ENCODE measurements at regions of chr2 and their contacts with region 1.

Region 1: GRCh38 chr2:75311993-75312392 is 112.7 kb upstream of the TACR1 start:
- DNase-seq: peak in 3 of 4 experiments; percentile 10 to 25 (median 24)
- ATAC-seq: peak; percentile 91
- H3K4me3 ChIP-seq: no peak overlapping the region
- H3K27ac ChIP-seq: no peak overlapping the region
- H3K4me1 ChIP-seq: peaks cover 0 to 5% of the 10 kb centered on the region in 2 experiments; a peak in 1 of 5 replicates
- H3K27me3 ChIP-seq: no peaks in the 10 kb centered on the region; a peak in 1 of 5 replicates
- CTCF ChIP-seq: peak in 1 of 3 experiments; percentile 37; a peak in 2 of 6 replicates
- EP300 ChIP-seq: no peak
- POLR2A ChIP-seq: no peak
- RAD21 ChIP-seq: no peak

Region 2: DNA sequence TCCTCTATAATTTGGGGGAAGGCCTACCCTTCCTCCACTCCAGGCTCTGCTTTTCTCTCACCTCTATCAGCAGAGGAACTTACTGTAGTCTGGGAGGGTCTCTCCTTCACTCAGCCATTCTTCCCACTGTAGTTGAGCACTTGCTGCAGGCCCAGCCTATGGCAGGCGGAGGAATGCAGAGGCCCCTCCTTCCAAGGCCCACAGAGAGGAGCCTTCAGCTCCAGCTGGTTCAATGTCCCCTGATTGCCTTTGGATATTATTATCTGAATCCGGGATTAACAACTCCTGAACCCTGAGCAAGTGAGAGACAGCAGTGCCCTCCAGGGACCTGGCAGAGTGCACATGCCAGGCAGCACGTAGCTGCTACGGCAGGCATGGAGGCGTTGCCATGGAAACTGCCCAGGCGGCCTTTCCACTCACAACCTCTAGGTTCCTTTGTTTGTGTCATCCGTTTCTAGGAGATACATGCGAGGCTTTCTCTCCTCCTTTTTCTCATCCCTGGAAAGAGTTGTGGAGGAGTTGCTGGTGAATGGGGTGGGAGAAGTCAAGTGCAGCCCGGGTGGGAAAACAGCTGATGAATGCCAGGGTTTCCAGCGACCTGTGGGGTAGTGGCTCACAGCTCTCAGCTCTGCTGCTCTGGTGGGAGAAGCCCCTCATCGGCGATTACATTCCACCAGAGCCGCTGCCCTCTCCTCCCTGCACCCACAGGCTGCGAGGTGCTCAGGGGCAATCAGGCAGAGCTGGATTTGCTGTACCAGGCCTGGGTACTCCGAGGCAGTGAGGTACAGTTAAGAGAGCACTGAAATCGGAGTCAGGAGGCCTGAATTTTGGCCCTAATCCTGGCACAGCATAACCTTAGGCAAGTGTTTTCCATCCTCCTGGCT is 533.4 kb before region 1 on chr2:
- CTCF ChIA-PET with region 1: no interaction called
- POLR2A ChIA-PET with region 1: no interaction called
- in situ Hi-C with region 1: no loop called
- intact Hi-C with region 1: no loop called
- DNase-seq: no peak
- ATAC-seq: peak; percentile 35; the same call in 2 of the 3 replicates
- H3K4me3 ChIP-seq: no peak overlapping the region
- H3K27ac ChIP-seq: no peak overlapping the region
- H3K4me1 ChIP-seq: no peaks in the 10 kb centered on the region
- H3K27me3 ChIP-seq: peaks cover 9 to 14% of the 10 kb centered on the region in 2 experiments; a peak in 4 of 5 replicates
- CTCF ChIP-seq: no peak
- EP300 ChIP-seq: no peak
- POLR2A ChIP-seq: no peak
- RAD21 ChIP-seq: no peak

Region 3: GRCh38 chr2:75064691-75065396 is 247.1 kb before region 1 on chr2:
- CTCF ChIA-PET with region 1: no interaction called
- POLR2A ChIA-PET with region 1: no interaction called
- in situ Hi-C with region 1: no loop called
- intact Hi-C with region 1: no loop called
- DNase-seq: peak; percentile 63 to 68 (median 64)
- ATAC-seq: peak; percentile 94
- H3K4me3 ChIP-seq: no peak overlapping the region
- H3K27ac ChIP-seq: no peak overlapping the region
- H3K4me1 ChIP-seq: no peaks in the 10 kb centered on the region
- H3K27me3 ChIP-seq: peaks cover 0 to 10% of the 10 kb centered on the region in 2 experiments; a peak in 3 of 5 replicates
- CTCF ChIP-seq: peak; percentile 79 to 93 (median 86)
- EP300 ChIP-seq: no peak
- POLR2A ChIP-seq: no peak
- RAD21 ChIP-seq: peak; percentile 58 to 82

Region 4: GRCh38 chr2:75173740-75174139 is 138.3 kb before region 1 on chr2:
- CTCF ChIA-PET with region 1: no interaction called
- POLR2A ChIA-PET with region 1: no interaction called
- in situ Hi-C with region 1: no loop called
- intact Hi-C with region 1: no loop called
- DNase-seq: no peak
- ATAC-seq: no peak
- H3K4me3 ChIP-seq: no peak overlapping the region
- H3K27ac ChIP-seq: no peak overlapping the region
- H3K4me1 ChIP-seq: no peaks in the 10 kb centered on the region
- H3K27me3 ChIP-seq: no peaks in the 10 kb centered on the region
- CTCF ChIP-seq: no peak
- EP300 ChIP-seq: no peak
- POLR2A ChIP-seq: no peak
- RAD21 ChIP-seq: no peak

Region 5: DNA sequence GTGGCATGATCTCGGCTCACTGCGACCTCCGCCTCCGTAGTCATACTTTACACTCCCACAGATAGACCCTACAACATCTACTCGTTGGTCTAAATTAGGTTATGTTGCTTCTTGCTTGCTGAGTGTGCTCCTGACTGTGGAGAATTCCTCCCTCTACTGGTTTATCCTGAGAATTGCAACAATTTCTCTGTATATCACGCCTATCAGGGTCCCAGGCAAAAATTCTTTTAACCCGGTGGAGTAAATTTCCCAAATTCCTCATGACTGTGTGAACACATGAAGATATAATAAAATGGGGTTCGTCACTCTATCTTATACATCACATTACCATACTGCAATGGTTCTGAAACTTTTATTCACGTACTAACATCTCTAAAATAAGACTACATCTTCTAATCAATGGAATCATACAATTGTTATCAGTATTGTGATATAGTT is 92.0 kb after region 1 on chr2:
- CTCF ChIA-PET with region 1: interaction called, 4 read pairs
- POLR2A ChIA-PET with region 1: no interaction called
- in situ Hi-C with region 1: no loop called
- intact Hi-C with region 1: loop called (anchors 5 kb)
- DNase-seq: peak; percentile 18 to 49 (median 30)
- ATAC-seq: peak; percentile 90
- H3K4me3 ChIP-seq: no peak overlapping the region
- H3K27ac ChIP-seq: no peak overlapping the region
- H3K4me1 ChIP-seq: no peaks in the 10 kb centered on the region
- H3K27me3 ChIP-seq: no peaks in the 10 kb centered on the region
- CTCF ChIP-seq: peak; percentile 65 to 81 (median 68)
- EP300 ChIP-seq: no peak
- POLR2A ChIP-seq: no peak
- RAD21 ChIP-seq: peak; percentile 76 to 77

Region 6: GRCh38 chr2:75527676-75528598 is 215.9 kb after region 1 on chr2:
- CTCF ChIA-PET with region 1: no interaction called
- POLR2A ChIA-PET with region 1: no interaction called
- in situ Hi-C with region 1: no loop called
- intact Hi-C with region 1: no loop called
- DNase-seq: no peak
- ATAC-seq: no peak
- H3K4me3 ChIP-seq: no peak overlapping the region
- H3K27ac ChIP-seq: no peak overlapping the region
- H3K4me1 ChIP-seq: no peaks in the 10 kb centered on the region
- H3K27me3 ChIP-seq: no peaks in the 10 kb centered on the region
- CTCF ChIP-seq: no peak
- EP300 ChIP-seq: no peak
- POLR2A ChIP-seq: no peak
- RAD21 ChIP-seq: no peak